ENCODE measurements at regions of chr15 and their contacts with region 1.

Region 1: GRCh38 chr15:89334510-89335288 is at the start of gene POLG:
- DNase-seq: peak; percentile 97 to 99
- ATAC-seq: peak; percentile 88 to 97 (median 89)
- H3K4me3 ChIP-seq: peak within 1 kb of the TSS; percentile 66
- H3K4me3 Mint-ChIP-seq: peak within 1 kb of the TSS; percentile 98
- H3K27ac ChIP-seq: peak within 1 kb of the TSS; percentile 66
- H3K27ac Mint-ChIP-seq: peak within 1 kb of the TSS; percentile 99 to 100
- H3K4me1 ChIP-seq: peaks cover 50% of the 10 kb centered on the region
- H3K4me1 Mint-ChIP-seq: peaks cover 47 to 51% of the 10 kb centered on the region in 2 donors
- H3K27me3 ChIP-seq: no peaks in the 10 kb centered on the region
- H3K27me3 Mint-ChIP-seq: peaks cover 0 to 3% of the 10 kb centered on the region in 2 donors
- CTCF ChIP-seq: no peak
- total RNA-seq, gene POLG: 205 to 253 (median 238) TPM

Region 2: GRCh38 chr15:88638626-88639372 is 695.9 kb before region 1 on chr15 and contains the start of gene ISG20:
- intact Hi-C with region 1: loop called (anchors 1 kb)
- DNase-seq: peak; percentile 93 to 99
- ATAC-seq: peak; percentile 80 to 95 (median 88)
- H3K4me3 ChIP-seq: peak within 1 kb of the TSS; percentile 70
- H3K4me3 Mint-ChIP-seq: peak within 1 kb of the TSS; percentile 92
- H3K27ac ChIP-seq: peak within 1 kb of the TSS; percentile 96
- H3K27ac Mint-ChIP-seq: peak within 1 kb of the TSS; percentile 97 to 98
- H3K4me1 ChIP-seq: peaks cover 79% of the 10 kb centered on the region
- H3K4me1 Mint-ChIP-seq: peaks cover 58 to 63% of the 10 kb centered on the region in 2 donors
- H3K27me3 ChIP-seq: no peaks in the 10 kb centered on the region
- H3K27me3 Mint-ChIP-seq: no peaks in the 10 kb centered on the region
- CTCF ChIP-seq: peak; percentile 38
- total RNA-seq, gene ISG20: 80.6 to 137 (median 116) TPM

Region 3: DNA sequence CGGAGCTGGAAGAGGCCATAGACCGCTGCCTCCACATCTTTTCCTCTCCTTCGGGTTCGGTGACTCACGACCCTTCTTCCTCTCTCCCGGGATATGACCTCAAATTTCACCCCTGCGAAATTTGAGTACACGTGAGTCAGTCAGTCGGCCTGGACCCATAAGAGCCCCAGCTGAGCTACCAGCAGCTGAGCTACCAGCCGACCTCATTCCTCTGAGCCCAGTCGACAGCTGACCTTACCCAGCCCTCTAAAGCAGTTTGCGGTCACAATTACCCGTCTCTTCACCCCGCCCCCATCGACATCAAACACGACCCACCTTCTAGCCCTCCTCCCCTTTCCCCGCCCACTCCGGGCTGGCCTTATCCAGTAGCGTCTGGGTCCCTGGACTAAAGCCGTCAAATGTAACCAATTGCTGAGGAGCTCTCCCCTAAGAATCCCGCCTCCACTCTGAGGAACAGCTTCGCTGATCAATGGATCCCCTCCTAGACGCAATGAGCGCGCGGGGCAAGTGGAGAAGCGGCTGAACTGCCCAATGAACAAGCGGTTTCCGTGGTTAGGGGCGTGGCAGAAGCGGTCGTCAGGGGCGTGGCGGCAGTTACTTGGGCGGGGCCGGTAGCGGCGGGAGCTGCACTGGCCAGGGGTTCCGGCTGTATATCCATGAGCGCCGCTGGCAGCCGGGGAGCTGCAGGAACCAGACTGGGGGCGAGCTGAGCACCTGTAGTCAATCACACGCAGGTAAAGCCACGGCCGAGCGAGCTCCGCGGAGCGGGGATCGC is 246.7 kb before region 1 on chr15 and contains the start of gene ABHD2:
- intact Hi-C with region 1: loop called (anchors 2 kb)
- DNase-seq: peak; percentile 98 to 99
- ATAC-seq: peak; percentile 89 to 98 (median 94)
- H3K4me3 ChIP-seq: peak within 1 kb of the TSS; percentile 98
- H3K4me3 Mint-ChIP-seq: no peak within 1 kb of the TSS
- H3K27ac ChIP-seq: peak within 1 kb of the TSS; percentile 82
- H3K27ac Mint-ChIP-seq: no peak within 1 kb of the TSS
- H3K4me1 ChIP-seq: peaks cover 39% of the 10 kb centered on the region
- H3K4me1 Mint-ChIP-seq: peaks cover 38 to 39% of the 10 kb centered on the region in 2 donors
- H3K27me3 ChIP-seq: no peaks in the 10 kb centered on the region
- H3K27me3 Mint-ChIP-seq: no peaks in the 10 kb centered on the region
- CTCF ChIP-seq: no peak
- total RNA-seq, gene ABHD2: 187 to 236 (median 191) TPM

Region 4: GRCh38 chr15:89206908-89207331 is 127.8 kb before region 1 on chr15:
- intact Hi-C with region 1: loop called (anchors 10 kb)
- DNase-seq: peak; percentile 69 to 81
- ATAC-seq: peak; percentile 77 to 81 (median 77)
- H3K4me3 ChIP-seq: no peak overlapping the region
- H3K4me3 Mint-ChIP-seq: peak overlapping the region; percentile 13
- H3K27ac ChIP-seq: no peak overlapping the region
- H3K27ac Mint-ChIP-seq: peak overlapping the region in 1 of 2 donors; percentile 49
- H3K4me1 ChIP-seq: peaks cover 43% of the 10 kb centered on the region
- H3K4me1 Mint-ChIP-seq: peaks cover 27 to 40% of the 10 kb centered on the region in 2 donors
- H3K27me3 ChIP-seq: no peaks in the 10 kb centered on the region
- H3K27me3 Mint-ChIP-seq: no peaks in the 10 kb centered on the region
- CTCF ChIP-seq: peak; percentile 99

Region 5: GRCh38 chr15:89243691-89244471 is 90.8 kb before region 1 on chr15 and contains the start of gene FANCI:
- intact Hi-C with region 1: loop called (anchors 5 kb)
- DNase-seq: peak; percentile 95 to 96
- ATAC-seq: peak; percentile 97 to 98 (median 98)
- H3K4me3 ChIP-seq: peak within 1 kb of the TSS; percentile 67
- H3K4me3 Mint-ChIP-seq: peak within 1 kb of the TSS; percentile 91
- H3K27ac ChIP-seq: peak within 1 kb of the TSS; percentile 11
- H3K27ac Mint-ChIP-seq: peak within 1 kb of the TSS; percentile 86 to 90
- H3K4me1 ChIP-seq: peaks cover 13% of the 10 kb centered on the region
- H3K4me1 Mint-ChIP-seq: peaks cover 20 to 37% of the 10 kb centered on the region in 2 donors
- H3K27me3 ChIP-seq: no peaks in the 10 kb centered on the region
- H3K27me3 Mint-ChIP-seq: no peaks in the 10 kb centered on the region
- CTCF ChIP-seq: peak; percentile 24
- total RNA-seq, gene FANCI: 22.3 to 27.9 (median 22.7) TPM